Panc1 (cell line): ENCODE measurements at regions of chr2 and their contacts with region 1.

Region 1: DNA sequence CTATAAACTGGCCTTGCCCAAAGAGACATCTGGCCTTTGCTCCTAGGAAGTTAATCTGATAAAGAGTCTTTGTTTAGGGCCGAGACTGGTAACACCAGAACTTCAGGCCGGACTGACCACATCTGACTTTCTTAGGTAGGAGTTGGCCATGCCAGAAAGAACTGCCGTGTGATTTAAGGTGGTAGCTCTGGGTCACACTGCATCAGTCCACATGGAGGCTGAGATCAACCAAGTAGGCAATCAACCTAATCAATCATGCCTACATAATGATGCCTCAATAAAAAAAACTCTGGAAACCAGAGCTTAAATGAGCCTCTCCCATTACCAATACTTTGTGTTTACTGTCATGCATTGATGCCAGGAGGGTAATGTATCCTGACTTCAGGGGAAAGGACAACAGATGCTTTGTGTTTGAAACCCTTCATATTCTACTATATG is 44.1 kb upstream of the ORC2 start:
- DNase-seq: no peak
- ATAC-seq: no peak
- H3K4me3 ChIP-seq: no peak overlapping the region
- H3K27ac ChIP-seq: no peak overlapping the region
- H3K4me1 ChIP-seq: no peaks in the 10 kb centered on the region
- H3K27me3 ChIP-seq: no peaks in the 10 kb centered on the region
- CTCF ChIP-seq: no peak

Region 2: DNA sequence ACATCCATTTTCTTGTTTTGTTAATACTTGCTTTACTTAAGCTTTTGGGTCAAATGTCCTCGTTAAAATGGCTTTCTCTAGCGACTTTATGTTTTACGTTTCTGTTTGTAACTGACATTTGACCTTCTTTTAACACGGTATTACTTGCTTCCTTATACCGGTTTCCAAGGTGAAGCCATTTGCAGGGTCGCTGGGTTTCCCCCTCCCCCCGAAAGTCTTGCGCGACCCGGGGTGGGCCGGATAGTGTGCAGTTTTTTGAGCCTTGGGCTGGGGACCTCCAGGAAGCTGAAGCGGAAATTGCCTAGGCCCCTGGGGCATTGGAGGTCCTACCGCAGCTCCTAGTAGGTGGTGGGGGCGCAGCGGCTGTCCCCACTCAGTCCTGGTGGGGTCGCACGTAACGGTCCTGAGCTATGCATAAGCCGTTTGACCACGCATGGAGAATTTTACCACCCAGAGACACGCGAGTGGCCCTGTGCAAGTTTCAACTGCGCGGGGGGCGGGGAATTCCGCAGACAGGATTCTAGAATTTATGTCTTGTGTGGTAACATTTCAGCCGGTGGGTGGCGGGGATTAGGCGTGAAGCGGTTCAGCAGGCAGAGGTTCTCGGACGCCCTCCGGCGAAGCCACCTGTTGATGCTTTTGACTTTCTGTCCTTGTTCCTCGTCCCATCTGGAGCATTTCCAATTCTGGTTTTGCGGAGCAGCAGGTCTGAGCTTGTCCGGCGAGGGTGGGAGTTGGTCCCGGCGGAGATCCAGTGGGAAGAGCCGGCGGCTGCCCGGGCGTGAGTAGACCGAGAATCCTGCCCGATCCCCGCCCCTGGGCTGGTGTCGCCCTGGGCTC is 110.8 kb after region 1 on chr2:
- CTCF ChIA-PET with region 1: no interaction called
- POLR2A ChIA-PET with region 1: interaction called, 12 read pairs
- in situ Hi-C with region 1: no loop called
- intact Hi-C with region 1: no loop called
- DNase-seq: peak; percentile 73
- ATAC-seq: peak; percentile 63
- H3K4me3 ChIP-seq: peak overlapping the region; percentile 67 to 84
- H3K27ac ChIP-seq: peak overlapping the region; percentile 100
- H3K4me1 ChIP-seq: peaks cover 48% of the 10 kb centered on the region
- H3K27me3 ChIP-seq: no peaks in the 10 kb centered on the region
- CTCF ChIP-seq: peak; percentile 76